Naive thymus-derived CD8-positive, alpha-beta T cell (primary cell): ENCODE measurements at regions of chr5 and their contacts with region 1.

Region 1: GRCh38 chr5:134053840-134054338 is 49.1 kb upstream of the VDAC1 start:
- DNase-seq: peak in 2 of 10 donors; percentile 41 to 43
- ATAC-seq: peak; percentile 86 to 93
- H3K4me3 Mint-ChIP-seq: peak overlapping the region; percentile 45 to 79 (median 74)
- H3K27ac Mint-ChIP-seq: peak overlapping the region; percentile 76 to 96 (median 91)
- H3K4me1 Mint-ChIP-seq: peaks cover 25 to 57% (median 54%) of the 10 kb centered on the region in 4 donors
- H3K27me3 Mint-ChIP-seq: no peaks in the 10 kb centered on the region

Region 2: GRCh38 chr5:133754575-133755169 is 299.2 kb before region 1 on chr5:
- POLR2A ChIA-PET with region 1: no interaction called
- DNase-seq: peak in 2 of 10 donors; percentile 17 to 19
- ATAC-seq: peak in 1 of 2 donors; percentile 32
- H3K4me3 Mint-ChIP-seq: no peak overlapping the region
- H3K27ac Mint-ChIP-seq: no peak overlapping the region
- H3K4me1 Mint-ChIP-seq: peaks cover 0 to 2% (median 0%) of the 10 kb centered on the region in 4 donors
- H3K27me3 Mint-ChIP-seq: peaks cover 3 to 28% (median 11%) of the 10 kb centered on the region in 5 donors

Region 3: GRCh38 chr5:134070725-134071613 is 17.1 kb after region 1 on chr5:
- POLR2A ChIA-PET with region 1: interaction called, 39 read pairs
- DNase-seq: peak in 4 of 10 donors; percentile 26 to 63 (median 33)
- ATAC-seq: peak; percentile 46 to 56
- H3K4me3 Mint-ChIP-seq: peak overlapping the region; percentile 74 to 88 (median 79)
- H3K27ac Mint-ChIP-seq: peak overlapping the region; percentile 79 to 90 (median 85)
- H3K4me1 Mint-ChIP-seq: peaks cover 35 to 75% (median 71%) of the 10 kb centered on the region in 4 donors
- H3K27me3 Mint-ChIP-seq: peaks cover 0 to 5% (median 0%) of the 10 kb centered on the region in 5 donors